IMR-90 (cell line): ENCODE measurements at regions of chr16 and their contacts with region 1.

Region 1: DNA sequence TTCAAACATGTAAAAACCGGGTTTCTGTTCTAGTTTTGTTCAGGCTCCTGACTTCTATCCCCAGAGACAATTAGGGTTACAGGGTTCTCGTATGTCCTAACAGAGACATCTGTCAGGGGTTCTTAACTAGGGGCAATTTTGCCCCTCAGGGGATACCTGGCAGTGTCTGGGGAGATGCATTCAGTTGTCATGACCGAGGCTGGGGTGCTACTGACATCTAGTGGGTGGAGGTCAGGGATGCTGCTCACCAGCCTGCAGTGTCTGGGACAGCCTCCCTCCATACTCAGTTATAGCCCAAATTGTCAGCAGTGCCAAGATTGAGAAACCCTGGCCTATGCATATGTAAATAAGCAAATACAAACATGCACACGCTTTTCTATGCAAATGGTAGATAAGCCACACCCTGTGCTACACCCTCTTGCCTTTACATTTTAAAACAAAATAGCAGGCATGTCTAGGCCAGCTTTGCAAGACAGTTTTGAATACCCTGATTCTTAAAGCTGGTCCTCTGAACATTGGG is 37.4 kb downstream of the CLEC16A start:
- DNase-seq: no peak
- ATAC-seq: no peak; the same call in 1 of the 2 replicates
- H3K4me3 ChIP-seq: no peak overlapping the region
- H3K27ac ChIP-seq: no peak overlapping the region
- H3K4me1 ChIP-seq: peaks cover 17% of the 10 kb centered on the region
- H3K27me3 ChIP-seq: no peaks in the 10 kb centered on the region
- CTCF ChIP-seq: peak; percentile 24; the same call in 1 of the 2 replicates
- POLR2A ChIP-seq: no peak
- RAD21 ChIP-seq: no peak; the same call in 1 of the 2 replicates

Region 2: DNA sequence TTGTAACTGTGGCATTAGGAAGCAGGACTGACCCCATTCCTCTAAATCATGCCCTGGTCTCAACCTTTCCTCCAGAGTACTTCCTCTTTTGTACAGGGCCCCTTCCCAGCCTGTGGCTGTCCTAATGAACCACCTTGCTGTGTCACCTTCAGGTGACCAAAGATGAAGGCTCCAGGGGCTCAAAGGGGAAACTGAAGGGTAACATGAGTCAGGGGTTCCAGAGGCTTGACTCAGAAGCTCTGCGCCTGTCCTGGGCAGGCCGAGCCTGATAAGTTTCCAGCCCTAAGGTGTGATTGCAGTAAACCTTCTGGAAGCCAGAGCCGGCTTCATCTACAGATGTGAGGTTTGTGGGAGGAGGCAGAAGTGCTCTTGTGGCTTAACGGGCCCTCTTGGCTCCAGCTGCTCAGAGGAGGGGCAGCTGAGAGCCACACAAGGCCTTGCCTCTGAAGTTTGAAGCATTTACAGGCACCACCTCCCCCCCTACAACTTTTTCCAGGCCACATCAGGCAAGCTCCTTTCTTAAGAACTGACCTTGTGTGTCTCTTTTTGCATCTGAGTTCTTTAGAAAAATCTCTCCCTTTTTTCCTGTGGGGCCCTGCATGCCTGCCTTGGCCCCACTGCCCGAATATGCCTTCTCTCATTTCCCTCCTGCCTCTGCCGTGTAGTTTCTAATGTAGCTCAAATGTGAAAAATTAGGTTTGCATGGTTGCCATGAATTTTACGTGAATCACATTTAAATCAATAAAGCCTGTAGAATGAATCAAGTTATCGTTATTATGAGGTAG is 112.5 kb after region 1 on chr16:
- CTCF ChIA-PET with region 1: no interaction called
- POLR2A ChIA-PET with region 1: interaction called, 5 read pairs
- dilution Hi-C with region 1: no loop called
- in situ Hi-C with region 1: loop called (anchors 10 kb)
- intact Hi-C with region 1: no loop called
- DNase-seq: peak; percentile 86
- ATAC-seq: peak; percentile 41
- H3K4me3 ChIP-seq: no peak overlapping the region
- H3K27ac ChIP-seq: peak overlapping the region; percentile 71
- H3K4me1 ChIP-seq: peaks cover 37% of the 10 kb centered on the region
- H3K27me3 ChIP-seq: no peaks in the 10 kb centered on the region
- CTCF ChIP-seq: no peak
- POLR2A ChIP-seq: no peak
- RAD21 ChIP-seq: no peak